Endothelial cell of umbilical vein (primary cell): ENCODE measurements at regions of chr12 and their contacts with region 1.

Region 1: GRCh38 chr12:76176940-76177339 is 92.5 kb upstream of the NAP1L1 start:
- DNase-seq: no peak
- H3K4me3 ChIP-seq: no peak overlapping the region
- H3K27ac ChIP-seq: no peak overlapping the region
- H3K4me1 ChIP-seq: no peaks in the 10 kb centered on the region
- H3K27me3 ChIP-seq: no peaks in the 10 kb centered on the region
- CTCF ChIP-seq: no peak
- POLR2A ChIP-seq: no peak

Region 2: DNA sequence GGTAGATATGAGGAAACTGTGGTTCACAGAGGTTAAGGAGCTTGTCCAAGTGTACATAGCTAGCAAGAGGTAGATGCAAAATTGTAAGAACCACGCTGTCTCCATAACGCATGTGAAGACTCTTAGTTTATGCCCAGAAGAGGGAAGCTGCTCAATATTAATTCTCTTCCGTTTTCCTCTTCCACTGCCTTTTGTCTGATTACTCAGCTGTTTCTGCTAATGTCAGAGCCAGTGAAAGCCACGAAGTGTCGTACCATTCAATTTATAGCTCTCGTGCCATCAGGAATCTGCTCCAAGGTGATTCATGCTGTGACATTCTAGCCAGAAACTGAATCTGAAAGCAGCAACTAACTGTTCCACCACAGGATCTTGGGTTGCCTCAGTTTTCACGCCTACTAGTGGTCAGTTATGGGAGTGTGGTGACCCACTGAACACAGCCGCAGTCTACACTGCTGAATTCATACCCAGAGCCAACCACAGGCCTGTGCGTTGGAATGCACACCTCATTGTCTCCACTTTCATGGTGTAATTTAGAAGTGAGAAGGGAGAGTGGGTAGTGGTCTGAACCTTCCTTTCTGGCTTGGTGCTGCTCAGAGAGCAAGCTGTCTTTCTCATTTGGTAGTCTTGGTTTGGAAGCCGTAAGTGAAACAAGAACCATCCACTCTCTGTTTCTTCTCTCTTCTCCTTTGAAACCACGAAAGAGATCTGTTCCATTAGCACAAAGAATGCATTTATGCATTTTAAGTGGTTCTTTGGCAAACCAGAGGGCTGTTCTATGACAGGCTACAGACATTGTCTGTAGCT is 18.2 kb before region 1 on chr12:
- CTCF ChIA-PET with region 1: interaction called, 19 read pairs
- POLR2A ChIA-PET with region 1: no interaction called
- dilution Hi-C with region 1: no loop called
- intact Hi-C with region 1: no loop called
- DNase-seq: peak; percentile 78
- H3K4me3 ChIP-seq: no peak overlapping the region
- H3K27ac ChIP-seq: no peak overlapping the region
- H3K4me1 ChIP-seq: peaks cover 4% of the 10 kb centered on the region
- H3K27me3 ChIP-seq: no peaks in the 10 kb centered on the region
- CTCF ChIP-seq: peak; percentile 74 to 77
- POLR2A ChIP-seq: no peak